MCF 10A (cell line): ENCODE measurements at regions of chr20 and their contacts with region 1.

Region 1: GRCh38 chr20:50189681-50190582 is 698 bp upstream of the CEBPB start:
- DNase-seq: peak; percentile 85
- H3K4me3 Mint-ChIP-seq: peak overlapping the region; percentile 90
- H3K27ac Mint-ChIP-seq: no peak overlapping the region
- H3K4me1 Mint-ChIP-seq: peaks cover 35% of the 10 kb centered on the region
- H3K27me3 Mint-ChIP-seq: no peaks in the 10 kb centered on the region
- CTCF ChIP-seq: peak; percentile 69

Region 2: GRCh38 chr20:49948809-49949548 is 241.0 kb before region 1 on chr20:
- CTCF ChIA-PET with region 1: no interaction called
- POLR2A ChIA-PET with region 1: no interaction called
- intact Hi-C with region 1: no loop called
- DNase-seq: no peak
- H3K4me3 Mint-ChIP-seq: no peak overlapping the region
- H3K27ac Mint-ChIP-seq: no peak overlapping the region
- H3K4me1 Mint-ChIP-seq: peaks cover 11% of the 10 kb centered on the region
- H3K27me3 Mint-ChIP-seq: no peaks in the 10 kb centered on the region
- CTCF ChIP-seq: no peak

Region 3: DNA sequence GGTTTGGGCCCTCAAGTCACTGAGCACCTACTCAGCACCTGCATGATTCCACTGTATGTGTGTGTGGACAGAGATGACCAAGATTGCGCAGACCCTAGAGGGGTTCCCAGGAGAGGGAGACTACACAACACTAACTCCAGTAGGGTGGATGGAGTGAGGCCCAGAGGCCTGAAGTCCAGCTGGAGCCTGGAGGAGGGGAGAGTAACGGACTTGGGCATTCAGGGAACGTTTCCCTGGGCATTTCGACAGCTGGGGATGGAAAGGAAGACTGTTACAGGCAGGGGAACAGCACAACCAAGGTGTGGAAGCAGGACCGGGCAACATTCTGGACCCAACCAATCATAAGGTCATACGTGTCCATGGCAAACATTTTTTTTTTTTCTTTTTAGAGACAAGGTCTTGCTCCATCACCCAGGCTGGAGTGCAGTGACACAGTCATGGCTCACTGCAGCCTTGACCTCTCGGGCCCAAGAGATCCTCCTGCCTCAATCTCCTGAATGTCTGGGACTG is 10.4 kb before region 1 on chr20:
- CTCF ChIA-PET with region 1: interaction called, 12 read pairs
- POLR2A ChIA-PET with region 1: interaction called, 3 read pairs
- intact Hi-C with region 1: no loop called
- DNase-seq: no peak
- H3K4me3 Mint-ChIP-seq: no peak overlapping the region
- H3K27ac Mint-ChIP-seq: no peak overlapping the region
- H3K4me1 Mint-ChIP-seq: peaks cover 5% of the 10 kb centered on the region
- H3K27me3 Mint-ChIP-seq: no peaks in the 10 kb centered on the region
- CTCF ChIP-seq: no peak

Region 4: GRCh38 chr20:50308513-50309279 is 118.8 kb after region 1 on chr20:
- CTCF ChIA-PET with region 1: interaction called, 8 read pairs
- POLR2A ChIA-PET with region 1: interaction called, 12 read pairs
- intact Hi-C with region 1: loop called (anchors 1 kb)
- DNase-seq: peak; percentile 99
- H3K4me3 Mint-ChIP-seq: no peak overlapping the region
- H3K27ac Mint-ChIP-seq: peak overlapping the region; percentile 49
- H3K4me1 Mint-ChIP-seq: peaks cover 66% of the 10 kb centered on the region
- H3K27me3 Mint-ChIP-seq: no peaks in the 10 kb centered on the region
- CTCF ChIP-seq: peak; percentile 6

Region 5: GRCh38 chr20:50335105-50335504 is 145.2 kb after region 1 on chr20:
- CTCF ChIA-PET with region 1: no interaction called
- POLR2A ChIA-PET with region 1: interaction called, 16 read pairs
- intact Hi-C with region 1: no loop called
- DNase-seq: peak; percentile 79
- H3K4me3 Mint-ChIP-seq: no peak overlapping the region
- H3K27ac Mint-ChIP-seq: peak overlapping the region; percentile 91
- H3K4me1 Mint-ChIP-seq: peaks cover 49% of the 10 kb centered on the region
- H3K27me3 Mint-ChIP-seq: no peaks in the 10 kb centered on the region
- CTCF ChIP-seq: no peak

Region 6: DNA sequence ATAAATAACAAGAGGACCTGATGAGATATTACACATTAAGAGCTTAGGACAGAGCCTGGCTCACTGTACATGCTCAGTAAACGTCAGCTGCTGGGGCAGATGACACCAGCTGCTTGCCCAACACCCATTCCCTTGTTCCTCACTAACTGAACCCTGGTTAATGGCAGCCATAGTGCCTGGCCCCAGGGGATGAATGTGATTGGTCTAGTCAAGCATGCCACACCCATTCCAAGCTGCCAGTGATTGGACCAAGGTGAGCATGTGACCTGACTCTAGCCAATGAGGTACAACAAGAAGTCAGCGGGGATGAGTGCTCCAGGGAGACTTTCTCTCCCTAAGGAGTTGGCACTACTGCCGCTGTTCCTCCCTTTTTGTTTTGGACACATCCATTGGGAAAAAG is 235.2 kb after region 1 on chr20:
- CTCF ChIA-PET with region 1: interaction called, 19 read pairs
- POLR2A ChIA-PET with region 1: interaction called, 79 read pairs
- intact Hi-C with region 1: no loop called
- DNase-seq: no peak
- H3K4me3 Mint-ChIP-seq: no peak overlapping the region
- H3K27ac Mint-ChIP-seq: peak overlapping the region; percentile 92
- H3K4me1 Mint-ChIP-seq: peaks cover 48% of the 10 kb centered on the region
- H3K27me3 Mint-ChIP-seq: no peaks in the 10 kb centered on the region
- CTCF ChIP-seq: no peak

Region 7: GRCh38 chr20:50731055-50731871 is 541.3 kb after region 1 on chr20 and contains the start of gene PARD6B:
- CTCF ChIA-PET with region 1: interaction called, 3 read pairs
- POLR2A ChIA-PET with region 1: interaction called, 10 read pairs
- intact Hi-C with region 1: no loop called
- DNase-seq: peak; percentile 99
- H3K4me3 Mint-ChIP-seq: peak within 1 kb of the TSS; percentile 77
- H3K27ac Mint-ChIP-seq: peak within 1 kb of the TSS; percentile 74
- H3K4me1 Mint-ChIP-seq: peaks cover 40% of the 10 kb centered on the region
- H3K27me3 Mint-ChIP-seq: no peaks in the 10 kb centered on the region
- CTCF ChIP-seq: no peak
- total RNA-seq, gene PARD6B: 5.3 and 5.8 TPM in 2 replicates